OCI-LY7 (cell line): ENCODE measurements at regions of chr19 and their contacts with region 1.

Region 1: DNA sequence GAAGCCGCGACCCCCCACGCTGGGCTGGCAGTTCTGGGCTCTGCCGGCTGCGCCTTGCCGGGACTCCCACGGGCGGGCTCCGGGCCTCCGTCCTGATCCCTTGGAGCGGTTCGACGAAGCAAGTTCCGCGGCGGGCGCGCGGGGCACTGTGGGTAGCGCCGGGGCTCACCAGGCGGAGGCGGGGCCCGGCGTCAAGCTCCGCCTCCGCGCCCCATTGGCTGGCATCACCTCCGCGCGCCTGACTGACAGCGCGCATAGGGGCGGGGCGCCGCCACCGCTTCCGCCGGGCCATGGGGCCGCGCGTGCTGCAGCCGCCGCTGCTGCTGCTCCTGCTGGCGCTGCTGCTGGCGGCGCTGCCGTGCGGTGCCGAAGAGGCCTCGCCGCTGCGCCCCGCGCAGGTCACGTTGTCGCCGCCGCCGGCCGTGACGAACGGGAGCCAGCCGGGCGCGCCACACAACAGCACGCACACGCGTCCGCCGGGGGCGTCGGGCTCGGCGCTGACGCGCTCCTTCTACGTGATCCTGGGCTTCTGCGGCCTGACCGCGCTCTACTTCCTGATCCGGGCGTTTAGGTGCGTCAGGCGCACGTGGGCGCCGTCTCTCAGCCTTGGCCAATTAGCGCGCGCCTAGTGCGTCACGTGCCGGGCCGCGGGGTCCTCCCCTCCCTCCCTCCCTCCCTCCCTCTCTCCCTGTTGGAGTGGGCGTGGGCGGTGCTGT is at the start of gene FAM174C:
- DNase-seq: peak; percentile 98
- H3K4me3 ChIP-seq: peak within 1 kb of the TSS; percentile 95
- H3K27ac ChIP-seq: peak within 1 kb of the TSS; percentile 92
- H3K4me1 ChIP-seq: peaks cover 55% of the 10 kb centered on the region
- CTCF ChIP-seq: no peak
- total RNA-seq, gene FAM174C: 52.6 and 53.2 TPM in 2 replicates

Region 2: GRCh38 chr19:1438035-1438932 is 162.9 kb after region 1 on chr19 and contains the start of gene RPS15:
- CTCF ChIA-PET with region 1: no interaction called
- POLR2A ChIA-PET with region 1: no interaction called
- intact Hi-C with region 1: loop called (anchors 5 kb)
- DNase-seq: peak; percentile 97
- H3K4me3 ChIP-seq: peak within 1 kb of the TSS; percentile 96
- H3K27ac ChIP-seq: peak within 1 kb of the TSS; percentile 68
- H3K4me1 ChIP-seq: peaks cover 27% of the 10 kb centered on the region
- CTCF ChIP-seq: peak; percentile 85
- total RNA-seq, gene RPS15: 2,068 and 2,241 TPM in 2 replicates